Mucosa of descending colon (tissue), 3 donors: ENCODE measurements at regions of chr15 and their contacts with region 1.

Region 1: DNA sequence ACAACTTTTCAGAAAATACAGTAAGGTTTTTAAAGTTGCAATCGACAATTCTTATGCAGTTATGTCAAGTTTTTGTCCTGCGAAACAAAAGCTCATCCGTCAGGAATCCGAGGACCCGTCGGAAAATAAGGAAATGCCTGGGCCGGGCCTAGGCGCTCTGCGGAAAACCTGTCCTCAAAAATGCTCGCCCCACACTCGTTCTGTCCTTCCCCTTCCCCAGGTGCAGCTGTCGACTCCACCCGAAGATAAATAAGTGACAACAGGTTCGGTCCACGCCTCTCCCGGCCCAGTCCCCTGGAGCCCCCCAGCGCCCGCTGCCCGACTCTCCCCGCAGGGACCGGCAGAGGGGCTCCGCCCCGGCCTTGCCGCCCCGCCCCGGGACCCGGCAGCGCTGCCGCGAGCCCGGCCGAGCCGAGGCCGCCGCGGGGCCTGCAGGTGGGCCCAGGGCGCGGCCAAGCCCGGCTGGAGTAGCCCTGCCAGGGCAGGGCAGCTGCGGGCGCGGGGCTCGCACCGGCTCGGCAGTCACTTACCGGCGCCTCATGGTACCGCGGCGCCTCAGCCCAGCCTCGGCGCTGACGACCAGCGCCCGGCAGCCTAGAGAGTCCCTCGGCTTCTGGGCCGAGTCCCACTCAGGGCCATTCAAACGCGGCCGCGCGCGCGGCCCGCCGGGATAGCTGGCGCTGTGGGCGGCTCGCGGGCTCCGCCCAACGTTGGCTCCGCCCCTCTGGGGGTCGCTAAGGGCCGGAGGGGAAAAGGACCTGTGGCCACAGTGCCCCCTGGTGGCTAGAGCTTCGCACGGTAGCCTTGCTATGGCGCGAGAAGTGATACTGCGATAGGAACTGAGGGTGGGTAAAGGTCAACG is at the start of gene KATNBL1:
- DNase-seq: peak; percentile 98 to 99 (median 99)
- ATAC-seq: peak; percentile 99
- H3K4me3 ChIP-seq: peak within 1 kb of the TSS; percentile 10
- H3K4me1 ChIP-seq: peaks cover 10% of the 10 kb centered on the region
- CTCF ChIP-seq: peak; percentile 88
- total RNA-seq, gene KATNBL1: 42.8 to 52.6 (median 46.2) TPM

Region 2: GRCh38 chr15:34065941-34066340 is 143.7 kb before region 1 on chr15:
- intact Hi-C with region 1: loop called (anchors 5 to 10 kb)
- DNase-seq: no peak
- ATAC-seq: no peak
- H3K4me3 ChIP-seq: no peak overlapping the region
- H3K4me1 ChIP-seq: no peaks in the 10 kb centered on the region
- CTCF ChIP-seq: no peak